ENCODE measurements at regions of chr10 and their contacts with region 1.

Region 1: GRCh38 chr10:80253266-80254245 is 35.9 kb downstream of the MAT1A start:
- DNase-seq: no peak
- ATAC-seq: no peak
- H3K4me3 ChIP-seq: no peak overlapping the region
- H3K27ac ChIP-seq: no peak overlapping the region
- H3K4me1 ChIP-seq: no peaks in the 10 kb centered on the region
- H3K27me3 ChIP-seq: no peaks in the 10 kb centered on the region
- CTCF ChIP-seq: no peak
- POLR2A ChIP-seq: no peak

Region 2: GRCh38 chr10:79542626-79543025 is 710.9 kb before region 1 on chr10:
- in situ Hi-C with region 1: loop called in 2 of 4 experiments (anchors 25 kb)
- intact Hi-C with region 1: no loop called
- DNase-seq: no peak
- ATAC-seq: no peak
- H3K4me3 ChIP-seq: no peak overlapping the region
- H3K27ac ChIP-seq: no peak overlapping the region
- H3K4me1 ChIP-seq: no peaks in the 10 kb centered on the region
- H3K27me3 ChIP-seq: no peaks in the 10 kb centered on the region
- CTCF ChIP-seq: no peak
- POLR2A ChIP-seq: no peak

Region 3: DNA sequence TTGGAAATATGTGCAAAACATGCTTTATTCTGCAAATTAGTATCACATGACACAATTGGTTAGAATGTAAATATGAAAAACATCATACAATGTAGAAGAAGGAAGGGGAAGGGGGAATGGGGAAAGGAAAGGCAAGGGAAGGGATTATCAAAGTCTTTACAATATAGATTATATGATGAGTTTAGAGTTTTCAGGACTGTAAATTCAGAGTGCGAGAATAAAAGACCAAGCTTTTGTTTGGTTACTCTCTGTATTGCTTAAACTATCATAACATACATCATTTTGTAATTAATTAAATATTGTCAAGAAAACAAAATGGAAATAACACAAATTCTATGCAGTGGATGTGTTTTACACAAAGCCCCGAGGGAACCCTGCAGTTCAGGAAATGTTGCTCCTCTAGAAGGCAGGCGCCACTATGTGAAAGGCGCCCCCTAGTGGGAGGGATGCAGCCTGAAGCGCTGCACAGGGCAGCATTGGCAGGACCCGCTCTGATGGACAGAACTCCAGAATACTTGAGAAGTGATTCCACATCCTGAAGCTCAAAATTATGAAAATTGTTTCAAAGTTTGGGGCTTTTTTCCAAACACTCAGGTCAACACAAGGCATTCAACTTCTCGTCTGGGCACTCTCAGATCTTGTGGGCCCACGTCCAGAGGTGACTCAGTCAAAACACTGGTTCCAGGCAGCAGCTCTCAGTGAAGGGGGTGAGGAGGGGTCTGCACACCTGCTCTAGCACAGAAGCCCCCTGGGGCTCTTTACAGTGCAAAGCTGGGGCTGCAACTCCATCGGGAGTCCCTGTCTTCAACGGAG is 206.7 kb before region 1 on chr10:
- in situ Hi-C with region 1: no loop called
- intact Hi-C with region 1: no loop called
- DNase-seq: peak in 1 of 2 donors; percentile 40
- ATAC-seq: peak; percentile 72 to 75
- H3K4me3 ChIP-seq: no peak overlapping the region
- H3K27ac ChIP-seq: no peak overlapping the region
- H3K4me1 ChIP-seq: no peaks in the 10 kb centered on the region
- H3K27me3 ChIP-seq: no peaks in the 10 kb centered on the region
- CTCF ChIP-seq: peak; percentile 43 to 88 (median 59)
- POLR2A ChIP-seq: no peak

Measured in gastrocnemius medialis (tissue), 4 donors.